ENCODE measurements at regions of chr5 and their contacts with region 1.

Region 1: GRCh38 chr5:141369994-141370848 is at the start of gene PCDHGB3:
- DNase-seq: peak in 3 of 4 experiments; percentile 21 to 56 (median 42)
- ATAC-seq: peak; percentile 98
- H3K4me3 ChIP-seq: peak within 1 kb of the TSS; percentile 27
- H3K27ac ChIP-seq: no peak within 1 kb of the TSS
- H3K4me1 ChIP-seq: peaks cover 0 to 14% of the 10 kb centered on the region in 2 experiments; a peak in 1 of 5 replicates
- H3K27me3 ChIP-seq: peaks cover 15 to 47% of the 10 kb centered on the region in 2 experiments
- CTCF ChIP-seq: peak; percentile 64 to 70 (median 67)
- EP300 ChIP-seq: no peak
- POLR2A ChIP-seq: no peak
- RAD21 ChIP-seq: peak; percentile 48 to 55
- polyA plus RNA-seq, gene PCDHGB3: not detected

Region 2: GRCh38 chr5:141326088-141326854 is 44.0 kb before region 1 on chr5:
- CTCF ChIA-PET with region 1: no interaction called
- POLR2A ChIA-PET with region 1: no interaction called
- in situ Hi-C with region 1: no loop called
- intact Hi-C with region 1: loop called (anchors 5 kb)
- DNase-seq: peak; percentile 63 to 86 (median 74)
- ATAC-seq: peak; percentile 99
- H3K4me3 ChIP-seq: peak overlapping the region; percentile 47
- H3K27ac ChIP-seq: peak overlapping the region; percentile 64; the same call in 2 of the 3 replicates
- H3K4me1 ChIP-seq: no peaks in the 10 kb centered on the region; a peak in 1 of 5 replicates
- H3K27me3 ChIP-seq: peaks cover 0 to 6% of the 10 kb centered on the region in 2 experiments; a peak in 3 of 5 replicates
- CTCF ChIP-seq: peak; percentile 83 to 90 (median 88)
- EP300 ChIP-seq: peak; percentile 22; the same call in 1 of the 2 replicates
- POLR2A ChIP-seq: peak; percentile 72
- RAD21 ChIP-seq: peak; percentile 62